CD14-positive monocyte (primary cell): ENCODE measurements at regions of chr3 and their contacts with region 1.

Region 1: GRCh38 chr3:108090701-108091451 is at the start of gene CD47:
- DNase-seq: peak; percentile 92 to 94 (median 93)
- H3K4me3 ChIP-seq: peak within 1 kb of the TSS; percentile 82 to 94 (median 90)
- H3K4me3 Mint-ChIP-seq: peak within 1 kb of the TSS; percentile 97 to 100
- H3K27ac ChIP-seq: peak within 1 kb of the TSS; percentile 86 to 96
- H3K27ac Mint-ChIP-seq: peak within 1 kb of the TSS; percentile 93 to 99 (median 97)
- H3K4me1 ChIP-seq: peaks cover 21 to 38% of the 10 kb centered on the region in 2 donors
- H3K4me1 Mint-ChIP-seq: peaks cover 16% of the 10 kb centered on the region
- H3K27me3 ChIP-seq: no peaks in the 10 kb centered on the region
- H3K27me3 Mint-ChIP-seq: peaks cover 2 to 6% (median 3%) of the 10 kb centered on the region in 3 donors
- CTCF ChIP-seq: no peak
- polyA plus RNA-seq, gene CD47: 52.3 to 203 (median 173) TPM

Region 2: GRCh38 chr3:108130701-108131474 is 40.0 kb after region 1 on chr3:
- intact Hi-C with region 1: loop called (anchors 2 to 5 kb)
- DNase-seq: peak; percentile 61 to 90 (median 86)
- H3K4me3 ChIP-seq: no peak overlapping the region
- H3K4me3 Mint-ChIP-seq: peak overlapping the region in 1 of 2 donors; percentile 68
- H3K27ac ChIP-seq: peak overlapping the region; percentile 73 to 85
- H3K27ac Mint-ChIP-seq: peak overlapping the region; percentile 66 to 99 (median 94)
- H3K4me1 ChIP-seq: peaks cover 46 to 59% of the 10 kb centered on the region in 2 donors
- H3K4me1 Mint-ChIP-seq: peaks cover 66% of the 10 kb centered on the region
- H3K27me3 ChIP-seq: no peaks in the 10 kb centered on the region
- H3K27me3 Mint-ChIP-seq: peaks cover 0 to 6% (median 1%) of the 10 kb centered on the region in 3 donors
- CTCF ChIP-seq: no peak

Region 3: DNA sequence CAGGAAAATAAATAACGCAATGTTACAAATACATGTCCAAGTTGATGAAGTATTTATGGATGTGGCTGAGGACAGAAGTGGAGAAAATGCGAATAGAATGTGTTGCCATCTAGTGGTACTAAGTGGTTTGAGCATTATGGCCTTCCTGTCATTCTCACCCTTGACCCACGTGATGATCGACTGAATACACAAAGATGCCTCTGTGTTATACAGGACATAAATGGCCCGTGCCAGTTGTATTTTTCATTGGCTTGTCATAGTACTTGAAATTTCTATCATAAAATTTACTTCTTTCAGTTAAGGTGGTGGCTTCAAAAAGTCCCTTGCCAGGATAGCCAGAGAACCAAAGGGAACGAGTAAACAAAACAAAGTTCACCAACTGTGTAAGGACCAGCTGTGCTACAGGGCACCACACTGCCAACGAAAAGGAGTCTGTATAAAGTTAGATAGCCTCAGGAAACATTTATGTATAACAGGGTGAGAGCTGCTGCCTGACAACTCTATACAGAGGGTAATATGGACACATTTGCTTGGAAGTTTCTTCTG is 315.9 kb after region 1 on chr3:
- intact Hi-C with region 1: loop called in 1 of 2 experiments (anchors 5 kb)
- DNase-seq: peak in 2 of 3 donors; percentile 39 to 66
- H3K4me3 ChIP-seq: no peak overlapping the region
- H3K4me3 Mint-ChIP-seq: no peak overlapping the region
- H3K27ac ChIP-seq: no peak overlapping the region
- H3K27ac Mint-ChIP-seq: peak overlapping the region in 4 of 7 donors; percentile 27 to 77 (median 62)
- H3K4me1 ChIP-seq: peaks cover 24 to 27% of the 10 kb centered on the region in 2 donors
- H3K4me1 Mint-ChIP-seq: peaks cover 30% of the 10 kb centered on the region
- H3K27me3 ChIP-seq: no peaks in the 10 kb centered on the region
- H3K27me3 Mint-ChIP-seq: no peaks in the 10 kb centered on the region
- CTCF ChIP-seq: peak; percentile 83